ENCODE measurements at regions of chr11 and their contacts with region 1.

Region 1: GRCh38 chr11:47373876-47374720 is 4.2 kb downstream of the SPI1 start:
- DNase-seq: peak; percentile 89
- H3K4me3 Mint-ChIP-seq: no peak overlapping the region
- H3K27ac Mint-ChIP-seq: no peak overlapping the region
- H3K4me1 Mint-ChIP-seq: peaks cover 23% of the 10 kb centered on the region
- H3K27me3 Mint-ChIP-seq: no peaks in the 10 kb centered on the region

Region 2: DNA sequence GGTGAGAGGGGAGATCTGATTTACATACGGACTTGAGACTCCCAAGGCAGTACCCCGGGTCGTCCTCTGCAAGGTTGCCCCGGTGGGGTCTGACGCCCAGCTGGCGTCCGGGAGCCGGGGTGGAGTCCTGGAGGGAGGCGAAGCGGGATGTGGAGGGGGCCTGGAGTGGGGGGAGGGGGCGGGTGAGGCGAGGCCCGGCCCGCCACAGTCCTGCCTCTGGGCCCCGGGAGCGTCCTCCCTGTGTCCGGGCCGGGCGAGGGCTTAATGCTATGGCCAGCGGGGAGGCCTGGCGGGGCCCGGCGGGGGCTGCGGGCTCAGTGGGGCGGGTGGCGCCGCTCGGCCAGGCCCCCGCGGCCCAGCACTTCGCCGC is 19.2 kb before region 1 on chr11:
- CTCF ChIA-PET with region 1: interaction called, 15 read pairs
- intact Hi-C with region 1: no loop called
- DNase-seq: no peak
- H3K4me3 Mint-ChIP-seq: no peak overlapping the region
- H3K27ac Mint-ChIP-seq: no peak overlapping the region
- H3K4me1 Mint-ChIP-seq: peaks cover 8% of the 10 kb centered on the region
- H3K27me3 Mint-ChIP-seq: no peaks in the 10 kb centered on the region

Region 3: DNA sequence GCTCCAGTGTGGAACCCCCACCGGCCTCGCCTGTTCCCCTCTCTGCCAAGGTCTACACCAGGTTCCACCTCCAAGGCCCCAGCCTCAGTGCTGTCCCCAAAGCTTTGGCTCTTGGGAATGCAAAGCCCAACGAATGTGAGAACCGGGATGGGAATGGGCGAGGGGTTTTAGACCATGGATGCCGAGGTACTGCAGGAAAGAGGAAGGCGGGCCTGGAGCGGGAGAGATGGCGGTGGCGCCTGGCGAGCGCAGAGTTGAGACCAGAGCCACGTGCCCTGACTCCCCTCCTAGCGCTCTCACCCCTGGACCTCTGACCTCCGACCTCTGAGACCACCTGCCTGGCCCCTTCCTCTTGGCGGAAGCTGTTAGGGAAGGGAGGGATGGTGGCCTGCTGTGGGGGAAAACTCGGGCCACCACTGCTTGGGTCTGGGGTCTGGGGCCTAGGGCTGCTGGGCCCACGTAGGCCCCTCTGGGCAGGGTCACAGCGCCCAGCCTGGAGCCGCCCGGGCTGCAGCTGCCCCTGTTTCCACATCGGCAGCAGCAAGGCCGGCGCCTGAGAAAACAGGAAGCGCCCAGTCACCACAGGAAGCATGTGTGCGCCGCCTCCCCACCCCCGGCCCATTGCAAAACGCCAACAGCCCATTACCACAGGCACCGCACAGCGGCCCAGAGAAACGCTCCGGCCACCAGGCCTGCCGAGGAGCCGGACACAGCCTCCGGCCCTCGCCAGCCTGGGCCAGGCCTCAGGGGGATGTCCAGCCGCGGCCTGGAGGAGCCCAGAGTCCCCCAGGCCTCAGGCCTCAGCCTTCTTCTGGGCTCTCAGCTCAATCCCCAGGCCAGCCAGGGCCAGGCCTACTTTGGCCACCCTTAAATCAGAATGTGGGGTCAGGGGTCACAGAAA is 20.5 kb after region 1 on chr11:
- CTCF ChIA-PET with region 1: interaction called, 32 read pairs
- intact Hi-C with region 1: no loop called
- DNase-seq: peak; percentile 75
- H3K4me3 Mint-ChIP-seq: peak overlapping the region; percentile 56
- H3K27ac Mint-ChIP-seq: peak overlapping the region; percentile 88
- H3K4me1 Mint-ChIP-seq: peaks cover 37% of the 10 kb centered on the region
- H3K27me3 Mint-ChIP-seq: no peaks in the 10 kb centered on the region

Region 4: DNA sequence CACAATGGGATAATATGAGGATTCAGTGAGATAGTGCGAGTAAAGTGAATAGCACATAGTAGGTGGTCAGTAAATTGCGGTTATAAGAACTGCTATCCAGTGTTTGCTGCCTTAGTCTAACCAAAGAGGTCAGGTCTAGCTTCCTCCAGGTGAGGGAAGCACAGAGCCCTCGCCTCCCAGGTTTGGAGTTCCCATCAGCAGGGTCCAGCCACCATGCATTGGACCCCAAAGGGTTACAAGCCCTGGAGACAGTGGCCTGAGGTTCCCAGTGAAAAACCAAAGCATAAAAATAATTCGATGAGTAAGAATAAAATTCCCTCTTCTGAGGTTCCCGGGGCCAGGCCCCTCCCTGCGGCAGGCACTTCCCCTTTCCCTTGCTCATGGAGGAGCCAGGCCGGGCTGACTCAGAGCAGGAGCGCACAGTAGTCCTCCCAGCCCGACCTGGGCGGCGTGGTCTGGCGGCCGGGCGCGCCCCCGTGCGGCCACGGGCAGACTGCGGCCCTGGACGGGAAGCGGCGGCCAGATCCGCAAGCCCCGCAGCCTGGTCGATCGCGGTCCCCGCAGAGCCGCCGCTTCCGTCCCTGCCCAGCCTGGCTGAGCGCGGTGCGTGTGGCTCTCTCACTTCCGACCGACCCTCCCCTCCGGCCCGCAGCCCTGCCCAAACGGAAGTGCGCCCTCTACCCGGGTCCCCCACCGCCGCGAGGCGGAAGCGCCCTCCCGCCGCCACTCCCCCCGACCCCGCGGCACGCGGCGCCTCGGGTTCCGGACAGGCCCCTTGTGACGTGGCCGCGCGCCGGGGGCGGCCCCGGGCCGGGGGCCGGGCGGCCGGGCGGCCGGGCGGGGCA is 33.9 kb after region 1 on chr11 and contains the start of gene SLC39A13:
- CTCF ChIA-PET with region 1: interaction called, 99 read pairs
- intact Hi-C with region 1: loop called (anchors 1 kb)
- DNase-seq: peak; percentile 91
- H3K4me3 Mint-ChIP-seq: peak within 1 kb of the TSS; percentile 92
- H3K27ac Mint-ChIP-seq: peak within 1 kb of the TSS; percentile 92
- H3K4me1 Mint-ChIP-seq: peaks cover 25% of the 10 kb centered on the region
- H3K27me3 Mint-ChIP-seq: no peaks in the 10 kb centered on the region
- total RNA-seq, gene SLC39A13: 9.2 TPM

Region 5: GRCh38 chr11:47454180-47454644 is 80.1 kb after region 1 on chr11:
- CTCF ChIA-PET with region 1: interaction called, 15 read pairs
- intact Hi-C with region 1: loop called (anchors 1 kb)
- DNase-seq: peak; percentile 85
- H3K4me3 Mint-ChIP-seq: no peak overlapping the region
- H3K27ac Mint-ChIP-seq: no peak overlapping the region
- H3K4me1 Mint-ChIP-seq: peaks cover 2% of the 10 kb centered on the region
- H3K27me3 Mint-ChIP-seq: no peaks in the 10 kb centered on the region

Region 6: DNA sequence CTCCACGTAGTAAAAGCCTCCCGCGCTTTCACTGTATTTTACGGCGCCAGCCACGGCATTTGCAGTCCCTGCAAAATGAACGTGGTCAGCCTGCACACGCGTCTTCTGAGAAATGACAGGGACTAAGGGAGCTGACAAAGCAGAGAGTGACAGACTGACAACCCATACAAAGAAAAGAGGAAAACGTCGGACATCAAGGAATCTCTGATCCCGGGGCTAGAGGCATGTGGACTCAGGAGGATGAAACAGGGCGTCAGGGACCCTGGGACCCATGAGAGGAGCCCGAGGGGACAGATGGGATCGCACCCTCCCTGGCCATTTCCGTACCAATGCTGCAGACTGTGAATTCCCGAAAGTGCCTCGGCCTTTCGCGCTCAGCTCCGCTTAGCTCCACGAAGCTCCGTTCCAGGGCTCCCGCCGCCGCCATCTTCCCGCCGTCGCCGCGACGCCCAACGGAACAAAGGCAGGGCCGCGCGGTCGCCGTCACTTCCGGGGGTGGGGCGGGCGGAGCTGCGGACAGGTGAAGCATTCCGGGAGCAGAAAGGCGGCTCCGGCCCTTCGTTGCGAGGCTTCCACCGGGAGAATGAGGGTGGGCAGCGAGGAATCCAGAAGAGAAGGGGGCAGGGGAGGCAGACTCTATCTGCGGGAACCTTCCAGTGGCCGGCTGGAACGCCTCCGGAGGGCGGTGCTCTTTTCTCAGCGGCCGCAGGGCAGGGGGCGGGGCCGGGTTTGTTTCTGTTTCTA is 474.0 kb after region 1 on chr11 and contains the start of gene NUP160:
- CTCF ChIA-PET with region 1: interaction called, 9 read pairs
- intact Hi-C with region 1: loop called (anchors 1 kb)
- DNase-seq: peak; percentile 92
- H3K4me3 Mint-ChIP-seq: peak within 1 kb of the TSS; percentile 93
- H3K27ac Mint-ChIP-seq: peak within 1 kb of the TSS; percentile 92
- H3K4me1 Mint-ChIP-seq: peaks cover 47% of the 10 kb centered on the region
- H3K27me3 Mint-ChIP-seq: no peaks in the 10 kb centered on the region
- total RNA-seq, gene NUP160: 64.7 to 64.8 TPM